Activated B cell treated with CpG ODN at 0.5 μM for 24 hours (primary cell): ENCODE measurements at regions of chr12 and their contacts with region 1.

Region 1: DNA sequence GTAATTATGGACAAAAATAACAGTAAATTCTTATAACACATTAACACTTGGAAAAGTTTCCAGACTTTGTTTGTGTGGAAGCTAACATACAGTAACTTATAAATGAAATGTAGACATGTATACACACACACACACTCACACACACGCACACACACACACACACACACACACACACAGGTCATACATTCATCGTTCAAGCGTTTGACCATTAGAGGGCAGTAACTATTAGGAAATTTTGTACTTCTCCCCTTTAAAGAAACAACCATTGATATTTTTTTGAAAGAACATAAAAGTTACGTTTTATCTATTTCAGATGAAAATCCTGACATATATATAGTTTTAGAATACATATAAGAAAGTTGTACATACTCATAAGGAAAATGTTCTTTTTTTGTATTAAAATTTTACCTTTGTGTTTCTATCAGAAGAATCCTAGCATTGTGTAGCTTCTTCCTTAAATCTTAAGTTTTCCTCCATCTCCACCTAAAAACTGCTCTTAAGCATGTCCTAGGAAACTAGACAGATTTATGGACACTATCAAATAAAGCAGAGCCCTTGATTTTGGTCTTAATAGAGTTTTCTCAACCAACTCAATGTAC is 29.0 kb downstream of the PTPRQ start:
- DNase-seq: no peak
- ATAC-seq: no peak
- H3K4me3 Mint-ChIP-seq: no peak overlapping the region
- H3K27ac Mint-ChIP-seq: no peak overlapping the region
- H3K4me1 Mint-ChIP-seq: no peaks in the 10 kb centered on the region
- H3K27me3 Mint-ChIP-seq: no peaks in the 10 kb centered on the region
- CTCF ChIP-seq: no peak

Region 2: DNA sequence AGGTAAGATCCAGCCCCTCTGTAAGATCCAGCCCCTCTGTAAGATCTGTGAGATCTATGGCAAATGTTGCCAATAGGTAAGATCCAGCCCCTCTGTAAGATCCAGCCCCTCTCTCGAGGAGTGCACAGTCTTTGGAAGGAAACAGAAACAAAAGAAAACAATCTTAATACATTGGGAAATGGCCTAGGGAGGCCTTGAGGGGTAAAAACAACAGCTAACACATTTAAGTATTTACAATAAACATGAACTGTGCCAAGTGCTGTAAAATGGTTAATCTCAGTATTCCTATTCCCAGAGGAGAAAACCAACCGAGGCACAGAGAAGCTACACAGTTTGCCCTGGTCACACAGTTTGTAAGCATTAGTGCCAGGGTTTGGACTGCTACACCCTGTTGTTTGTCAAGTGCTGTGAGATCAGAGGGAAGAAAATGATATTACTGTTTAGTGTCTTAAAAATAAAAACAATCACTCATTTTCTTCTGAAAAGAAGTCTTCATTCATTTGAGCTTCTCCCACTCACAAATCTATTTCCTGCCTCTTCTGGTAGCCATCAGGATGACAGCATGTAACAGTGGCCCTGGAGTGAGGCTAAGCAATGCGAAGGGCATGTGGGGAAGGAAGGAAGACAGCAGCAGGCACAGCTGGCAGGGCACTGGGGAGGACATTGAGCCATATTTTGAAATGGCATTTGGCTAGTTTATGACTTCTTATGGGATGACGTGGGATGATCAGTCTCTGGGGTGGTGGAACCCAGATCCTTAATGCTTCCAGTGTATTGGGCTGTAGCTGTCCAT is 147.6 kb before region 1 on chr12:
- CTCF ChIA-PET with region 1: no interaction called
- POLR2A ChIA-PET with region 1: no interaction called
- intact Hi-C with region 1: no loop called
- DNase-seq: no peak
- ATAC-seq: no peak
- H3K4me3 Mint-ChIP-seq: no peak overlapping the region
- H3K27ac Mint-ChIP-seq: no peak overlapping the region
- H3K4me1 Mint-ChIP-seq: no peaks in the 10 kb centered on the region
- H3K27me3 Mint-ChIP-seq: no peaks in the 10 kb centered on the region
- CTCF ChIP-seq: no peak

Region 3: GRCh38 chr12:80485222-80485987 is 12.4 kb after region 1 on chr12:
- CTCF ChIA-PET with region 1: no interaction called
- POLR2A ChIA-PET with region 1: no interaction called
- intact Hi-C with region 1: no loop called
- DNase-seq: no peak
- ATAC-seq: no peak
- H3K4me3 Mint-ChIP-seq: no peak overlapping the region
- H3K27ac Mint-ChIP-seq: no peak overlapping the region
- H3K4me1 Mint-ChIP-seq: no peaks in the 10 kb centered on the region
- H3K27me3 Mint-ChIP-seq: no peaks in the 10 kb centered on the region
- CTCF ChIP-seq: no peak

Region 4: DNA sequence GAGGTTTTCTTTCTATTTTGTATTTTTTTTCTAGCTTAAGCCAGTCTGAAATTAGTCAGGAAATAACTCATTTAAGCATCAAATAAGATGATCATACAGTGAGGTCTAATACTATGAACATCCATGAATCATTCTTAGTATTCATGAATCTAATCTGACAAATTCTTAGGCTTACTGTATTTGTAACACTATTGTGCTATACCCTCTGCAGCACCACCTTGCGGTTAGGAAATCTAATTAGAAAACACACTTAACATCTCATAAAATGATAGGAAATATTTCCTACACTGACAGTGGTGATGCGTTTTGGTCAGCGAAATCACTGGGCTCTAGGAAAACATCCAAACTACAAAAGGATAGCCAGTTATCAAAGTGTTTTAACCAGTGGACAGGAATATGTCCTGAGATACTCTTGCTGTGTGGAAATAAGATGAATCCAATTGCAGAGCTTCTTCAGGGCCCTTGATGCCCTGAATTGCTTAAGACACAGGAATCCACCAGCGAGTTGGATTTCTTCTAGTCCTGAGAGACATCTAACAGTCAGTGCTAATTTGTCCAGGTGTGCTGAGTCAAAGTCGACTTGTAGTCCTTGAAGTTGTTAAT is 125.1 kb after region 1 on chr12:
- CTCF ChIA-PET with region 1: no interaction called
- POLR2A ChIA-PET with region 1: no interaction called
- intact Hi-C with region 1: loop called (anchors 1 kb)
- DNase-seq: no peak
- ATAC-seq: no peak
- H3K4me3 Mint-ChIP-seq: no peak overlapping the region
- H3K27ac Mint-ChIP-seq: no peak overlapping the region
- H3K4me1 Mint-ChIP-seq: no peaks in the 10 kb centered on the region
- H3K27me3 Mint-ChIP-seq: no peaks in the 10 kb centered on the region
- CTCF ChIP-seq: no peak